ENCODE measurements at regions of chr14 and their contacts with region 1.

Region 1: DNA sequence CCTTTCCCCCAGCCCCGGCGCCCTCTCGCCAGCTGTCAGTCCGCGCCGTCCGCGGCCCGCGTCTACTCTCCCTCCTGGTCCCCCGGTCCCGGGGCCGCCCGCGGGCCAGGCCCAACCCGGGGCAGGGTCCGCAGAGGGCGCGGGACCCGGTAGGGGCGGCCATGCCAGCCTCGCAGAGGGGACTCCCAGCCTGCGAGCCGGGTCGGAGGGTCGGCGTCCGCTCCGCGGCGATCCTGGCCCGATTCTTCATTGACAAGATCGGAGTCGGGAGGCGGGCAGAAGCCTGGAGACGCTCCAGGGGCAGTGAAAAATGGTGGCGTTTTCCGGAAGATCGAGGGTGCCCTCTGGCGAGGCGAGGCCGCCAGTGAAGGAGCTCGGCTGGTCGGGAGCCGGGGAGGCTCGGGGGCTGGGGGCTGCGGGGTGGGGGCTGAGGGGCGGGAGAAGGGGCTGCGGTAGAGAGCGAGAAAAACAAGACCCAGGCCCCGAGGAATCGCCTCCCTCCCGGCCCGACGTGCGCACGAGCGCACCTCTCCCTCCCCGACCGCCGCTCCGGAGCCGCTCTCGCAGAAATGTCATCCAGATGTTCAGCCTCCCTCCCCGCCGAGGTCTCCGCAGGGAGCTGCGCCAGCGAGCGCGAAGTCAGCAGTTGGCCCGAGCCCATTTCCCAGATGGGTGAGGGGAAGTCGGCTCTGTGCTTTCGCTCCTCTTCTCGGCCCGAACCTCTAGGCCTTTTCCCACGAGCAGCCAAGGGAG is 647 bp upstream of the TGFB3 start:
- DNase-seq: no peak
- ATAC-seq: peak; percentile 83
- H3K4me3 ChIP-seq: peak overlapping the region; percentile 64
- H3K27ac ChIP-seq: peak overlapping the region; percentile 31; the same call in 1 of the 2 replicates
- H3K4me1 ChIP-seq: peaks cover 19% of the 10 kb centered on the region
- H3K27me3 ChIP-seq: no peaks in the 10 kb centered on the region
- CTCF ChIP-seq: peak; percentile 79

Region 2: GRCh38 chr14:75864352-75864751 is 118.1 kb before region 1 on chr14:
- CTCF ChIA-PET with region 1: no interaction called
- POLR2A ChIA-PET with region 1: interaction called, 11 read pairs
- in situ Hi-C with region 1: no loop called
- intact Hi-C with region 1: no loop called
- DNase-seq: no peak
- ATAC-seq: no peak
- H3K4me3 ChIP-seq: no peak overlapping the region
- H3K27ac ChIP-seq: no peak overlapping the region
- H3K4me1 ChIP-seq: peaks cover 27% of the 10 kb centered on the region
- H3K27me3 ChIP-seq: no peaks in the 10 kb centered on the region
- CTCF ChIP-seq: no peak

Region 3: DNA sequence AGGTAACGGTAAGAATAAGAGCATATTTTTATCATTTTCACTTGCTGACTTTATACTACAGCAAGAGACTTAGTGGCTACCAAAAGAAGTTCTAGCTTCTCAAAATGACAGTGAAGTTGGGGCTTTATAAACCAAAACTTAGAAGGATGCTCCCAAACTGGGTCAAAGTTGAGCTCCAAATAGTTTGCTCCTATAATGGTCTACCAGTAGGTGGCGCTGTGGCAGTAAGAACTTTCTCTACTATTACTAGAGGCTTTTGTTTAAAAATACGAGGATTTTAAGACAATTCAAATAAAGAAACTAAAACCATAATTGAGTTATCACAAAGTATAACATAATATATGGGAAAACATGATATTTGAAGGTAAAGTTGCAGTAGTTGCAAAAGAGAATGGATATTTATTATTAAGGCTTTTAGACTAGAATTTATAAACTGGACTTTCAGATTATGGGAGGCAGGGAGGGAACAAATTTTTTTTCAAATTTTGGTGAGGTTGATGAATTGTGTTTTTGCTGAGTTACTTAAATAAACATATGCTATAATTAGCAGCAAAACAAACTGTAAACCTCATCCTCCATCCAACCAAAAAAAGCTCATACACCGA is 75.7 kb before region 1 on chr14:
- CTCF ChIA-PET with region 1: interaction called, 9 read pairs
- POLR2A ChIA-PET with region 1: no interaction called
- in situ Hi-C with region 1: no loop called
- intact Hi-C with region 1: loop called (anchors 5 kb)
- DNase-seq: peak; percentile 18
- ATAC-seq: no peak
- H3K4me3 ChIP-seq: no peak overlapping the region
- H3K27ac ChIP-seq: no peak overlapping the region
- H3K4me1 ChIP-seq: no peaks in the 10 kb centered on the region
- H3K27me3 ChIP-seq: no peaks in the 10 kb centered on the region
- CTCF ChIP-seq: peak; percentile 76; the same call in 1 of the 2 replicates

Region 4: DNA sequence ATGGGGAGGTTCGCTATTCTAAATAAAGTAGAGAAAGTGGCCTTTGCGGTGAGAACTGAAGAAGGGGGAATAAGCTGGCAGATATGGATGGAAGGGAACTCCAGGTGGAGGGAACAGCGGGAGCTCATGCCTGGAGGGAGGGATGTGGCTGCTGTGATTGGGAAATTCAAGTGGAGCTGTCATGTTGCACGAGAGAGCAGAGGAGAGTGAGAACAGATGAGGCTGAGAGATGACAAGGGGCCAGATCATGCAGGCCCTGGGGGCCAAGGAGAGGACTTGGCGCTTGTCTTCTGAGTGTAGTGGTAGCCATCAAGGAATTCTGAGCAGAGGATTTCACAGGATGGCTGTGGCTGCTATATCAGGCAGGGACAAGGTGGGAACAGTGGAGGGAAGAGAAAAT is 35.7 kb before region 1 on chr14:
- CTCF ChIA-PET with region 1: no interaction called
- POLR2A ChIA-PET with region 1: no interaction called
- in situ Hi-C with region 1: no loop called
- intact Hi-C with region 1: no loop called
- DNase-seq: no peak
- ATAC-seq: no peak
- H3K4me3 ChIP-seq: no peak overlapping the region
- H3K27ac ChIP-seq: no peak overlapping the region
- H3K4me1 ChIP-seq: no peaks in the 10 kb centered on the region
- H3K27me3 ChIP-seq: no peaks in the 10 kb centered on the region
- CTCF ChIP-seq: no peak

Region 5: DNA sequence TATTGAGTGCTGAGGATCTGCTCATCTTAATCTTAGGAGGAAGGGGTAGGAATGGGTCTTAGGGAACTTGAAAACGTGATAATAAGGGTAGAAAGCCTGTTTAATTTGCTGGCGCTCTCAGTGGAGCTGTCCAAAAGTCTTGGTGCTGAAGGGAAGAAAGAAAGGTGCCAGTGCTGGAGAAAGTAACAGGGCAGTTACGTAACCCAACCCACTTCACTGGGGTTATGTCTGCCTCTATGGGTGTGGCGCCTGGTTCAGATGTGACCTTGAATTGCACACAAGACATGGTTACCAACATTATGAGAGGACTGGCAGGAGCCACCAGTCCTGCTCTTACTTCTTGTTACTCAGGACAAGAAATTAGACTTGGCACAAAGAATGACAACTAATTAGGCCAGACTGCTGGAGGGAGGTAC is 150.6 kb after region 1 on chr14:
- CTCF ChIA-PET with region 1: no interaction called
- POLR2A ChIA-PET with region 1: no interaction called
- in situ Hi-C with region 1: no loop called
- intact Hi-C with region 1: no loop called
- DNase-seq: no peak
- ATAC-seq: no peak
- H3K4me3 ChIP-seq: no peak overlapping the region
- H3K27ac ChIP-seq: no peak overlapping the region
- H3K4me1 ChIP-seq: no peaks in the 10 kb centered on the region
- H3K27me3 ChIP-seq: peaks cover 7% of the 10 kb centered on the region; the same call in 1 of the 2 replicates
- CTCF ChIP-seq: no peak